Heart right ventricle (tissue), 16 donors: ENCODE measurements at regions of chr3 and their contacts with region 1.

Region 1: GRCh38 chr3:29693863-29694262 is 413.0 kb downstream of the RBMS3 start:
- DNase-seq: no peak
- ATAC-seq: peak in 3 of 8 donors; percentile 47 to 53 (median 51)
- H3K4me3 ChIP-seq: no peak overlapping the region
- H3K27ac ChIP-seq: peak overlapping the region in 7 of 10 donors; percentile 53 to 89 (median 74)
- H3K4me1 ChIP-seq: peaks cover 3 to 47% (median 42%) of the 10 kb centered on the region in 9 donors
- H3K27me3 ChIP-seq: no peaks in the 10 kb centered on the region
- CTCF ChIP-seq: no peak

Region 2: DNA sequence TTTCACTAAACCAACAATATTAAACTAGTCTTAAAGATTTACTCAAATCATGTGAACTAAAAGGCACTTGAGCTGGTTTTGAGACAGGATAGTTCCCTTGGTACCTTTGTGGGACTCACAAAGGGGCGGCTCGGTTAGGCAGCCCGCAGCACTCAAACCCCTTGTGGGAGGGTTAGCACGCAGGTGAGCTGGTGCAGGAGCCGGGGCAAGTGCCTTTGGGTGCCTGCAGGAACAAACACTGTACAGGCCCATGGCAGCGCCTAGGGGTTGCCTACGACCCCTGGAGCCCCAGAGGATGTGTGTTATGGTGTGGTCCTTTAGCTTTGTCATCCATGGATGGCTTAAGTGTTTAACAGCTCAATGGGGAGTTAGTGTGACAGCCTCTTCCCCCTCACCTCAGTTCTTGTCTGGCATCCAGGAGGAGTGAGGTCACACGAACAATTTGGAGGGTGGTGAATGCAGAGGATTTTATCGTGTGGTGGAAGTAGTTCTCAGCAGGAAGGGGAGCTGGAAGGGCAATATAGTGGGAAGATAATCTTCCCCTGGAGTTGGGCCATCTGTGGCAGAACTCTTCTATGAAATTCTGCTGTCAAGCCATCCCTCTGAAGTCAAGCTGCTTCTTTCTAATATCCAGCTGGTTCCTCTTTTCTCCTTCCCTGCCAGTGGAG is 57.9 kb after region 1 on chr3:
- intact Hi-C with region 1: loop called in 3 of 10 experiments (anchors 5 to 10 kb)
- DNase-seq: peak; percentile 9 to 54
- ATAC-seq: peak; percentile 36 to 95 (median 84)
- H3K4me3 ChIP-seq: no peak overlapping the region
- H3K27ac ChIP-seq: peak overlapping the region in 7 of 10 donors; percentile 2 to 54 (median 41)
- H3K4me1 ChIP-seq: peaks cover 0 to 47% (median 23%) of the 10 kb centered on the region in 9 donors
- H3K27me3 ChIP-seq: no peaks in the 10 kb centered on the region
- CTCF ChIP-seq: no peak

Region 3: GRCh38 chr3:29759411-29760225 is 65.8 kb after region 1 on chr3:
- intact Hi-C with region 1: loop called in 4 of 10 experiments (anchors 5 to 10 kb)
- DNase-seq: peak in 1 of 2 donors; percentile 9
- ATAC-seq: peak in 7 of 8 donors; percentile 44 to 75 (median 57)
- H3K4me3 ChIP-seq: peak overlapping the region in 2 of 10 donors; percentile 9 to 11
- H3K27ac ChIP-seq: peak overlapping the region; percentile 4 to 88 (median 78)
- H3K4me1 ChIP-seq: peaks cover 11 to 67% (median 57%) of the 10 kb centered on the region in 9 donors
- H3K27me3 ChIP-seq: no peaks in the 10 kb centered on the region
- CTCF ChIP-seq: no peak

Region 4: DNA sequence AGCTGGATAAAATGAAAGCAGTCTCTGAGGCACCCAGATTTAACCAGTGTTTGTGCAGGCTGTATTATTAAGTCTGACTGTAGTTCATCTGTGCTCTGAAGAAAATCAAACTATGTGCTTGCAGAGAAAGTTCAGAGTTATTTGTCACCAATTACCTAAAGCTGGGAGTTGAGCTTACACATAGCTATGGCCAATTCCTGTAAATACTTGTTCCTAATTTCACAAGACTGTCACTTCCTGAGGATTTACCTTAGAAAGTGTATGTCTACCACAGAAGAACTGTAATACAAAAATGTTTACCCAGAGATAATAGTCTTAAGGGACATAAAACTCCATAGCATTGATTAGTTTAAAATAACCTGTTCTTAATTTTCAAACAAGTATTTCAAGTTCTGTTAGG is 284.2 kb after region 1 on chr3:
- intact Hi-C with region 1: no loop called
- DNase-seq: no peak
- ATAC-seq: no peak
- H3K4me3 ChIP-seq: no peak overlapping the region
- H3K27ac ChIP-seq: peak overlapping the region in 2 of 10 donors; percentile 3 to 64
- H3K4me1 ChIP-seq: peaks cover 0 to 23% (median 4%) of the 10 kb centered on the region in 9 donors
- H3K27me3 ChIP-seq: no peaks in the 10 kb centered on the region
- CTCF ChIP-seq: no peak